Head of caudate nucleus (tissue), 42 donors: ENCODE measurements at regions of chr22 and their contacts with region 1.

Region 1: GRCh38 chr22:37199103-37199759 is 11.2 kb upstream of the C1QTNF6 start:
- DNase-seq: peak; percentile 91 to 99 (median 97)

Region 2: GRCh38 chr22:36775964-36776669 is 423.1 kb before region 1 on chr22 and contains the start of gene IFT27:
- intact Hi-C with region 1: loop called (anchors 10 kb)
- DNase-seq: peak; percentile 95 to 100 (median 100)

Region 3: GRCh38 chr22:37166675-37167066 is 32.6 kb before region 1 on chr22:
- intact Hi-C with region 1: loop called (anchors 2 kb)
- DNase-seq: peak; percentile 72 to 92 (median 86)